ENCODE measurements at regions of chr9 and their contacts with region 1.

Region 1: GRCh38 chr9:137188490-137189296 is at the starts of genes ANAPC2 and SSNA1:
- DNase-seq: peak; percentile 96
- ATAC-seq: peak; percentile 85
- H3K4me3 Mint-ChIP-seq: peak within 1 kb of the TSS; percentile 91
- H3K27ac Mint-ChIP-seq: peak within 1 kb of the TSS; percentile 88
- H3K4me1 Mint-ChIP-seq: peaks cover 33% of the 10 kb centered on the region
- H3K27me3 Mint-ChIP-seq: no peaks in the 10 kb centered on the region
- total RNA-seq, gene ANAPC2: 30.8 to 38.4 TPM
- total RNA-seq, gene SSNA1: 53.6 to 58.6 TPM

Region 2: GRCh38 chr9:137114610-137115391 is 73.9 kb before region 1 on chr9 and contains the start of gene DPP7:
- CTCF ChIA-PET with region 1: interaction called, 3 read pairs
- POLR2A ChIA-PET with region 1: no interaction called
- intact Hi-C with region 1: loop called in 1 of 2 experiments (anchors 2 kb)
- DNase-seq: peak; percentile 89
- ATAC-seq: peak; percentile 90
- H3K4me3 Mint-ChIP-seq: peak within 1 kb of the TSS; percentile 72
- H3K27ac Mint-ChIP-seq: peak within 1 kb of the TSS; percentile 51
- H3K4me1 Mint-ChIP-seq: peaks cover 13% of the 10 kb centered on the region
- H3K27me3 Mint-ChIP-seq: no peaks in the 10 kb centered on the region
- total RNA-seq, gene DPP7: 188 to 204 TPM

Region 3: DNA sequence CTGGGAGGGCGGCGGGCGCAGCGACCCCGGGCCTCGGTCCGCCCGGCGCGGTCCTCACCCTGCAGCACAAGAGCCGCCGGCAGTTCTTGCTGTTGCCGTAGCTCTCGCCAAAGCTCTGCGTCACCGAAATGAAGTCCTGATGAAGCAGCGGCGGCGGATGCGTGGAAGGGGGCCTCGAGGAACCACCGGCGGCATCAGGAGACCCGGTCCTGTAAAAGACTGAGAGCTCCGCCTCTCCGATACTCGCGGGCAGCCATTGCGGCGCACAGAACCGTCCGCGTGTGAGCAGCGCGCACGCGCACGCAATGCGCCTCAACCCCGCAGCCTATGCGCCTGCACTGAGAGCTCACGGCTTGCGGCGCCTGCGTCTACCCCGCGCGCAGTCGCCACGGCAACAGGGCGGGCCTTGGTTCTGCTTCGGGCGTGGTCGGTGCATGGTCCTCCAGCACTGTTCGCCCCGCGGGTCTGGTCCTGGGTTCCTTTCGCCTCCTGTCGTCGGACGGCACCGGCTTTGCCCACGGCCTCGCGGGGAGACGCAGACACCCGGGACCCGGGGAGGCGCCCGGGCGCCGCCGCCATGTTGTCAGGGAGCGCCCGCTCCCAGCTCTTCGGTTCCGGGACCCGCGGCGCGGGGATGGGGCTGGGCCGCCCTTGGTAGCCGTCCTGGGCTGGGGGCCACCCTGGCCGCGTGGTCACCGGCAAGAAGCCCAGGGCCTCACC is 59.1 kb before region 1 on chr9:
- CTCF ChIA-PET with region 1: no interaction called
- POLR2A ChIA-PET with region 1: interaction called, 4 read pairs
- intact Hi-C with region 1: loop called in 1 of 2 experiments (anchors 2 kb)
- DNase-seq: peak; percentile 95
- ATAC-seq: peak; percentile 96
- H3K4me3 Mint-ChIP-seq: peak overlapping the region; percentile 89
- H3K27ac Mint-ChIP-seq: peak overlapping the region; percentile 70
- H3K4me1 Mint-ChIP-seq: peaks cover 21% of the 10 kb centered on the region
- H3K27me3 Mint-ChIP-seq: peaks cover 5% of the 10 kb centered on the region

Region 4: DNA sequence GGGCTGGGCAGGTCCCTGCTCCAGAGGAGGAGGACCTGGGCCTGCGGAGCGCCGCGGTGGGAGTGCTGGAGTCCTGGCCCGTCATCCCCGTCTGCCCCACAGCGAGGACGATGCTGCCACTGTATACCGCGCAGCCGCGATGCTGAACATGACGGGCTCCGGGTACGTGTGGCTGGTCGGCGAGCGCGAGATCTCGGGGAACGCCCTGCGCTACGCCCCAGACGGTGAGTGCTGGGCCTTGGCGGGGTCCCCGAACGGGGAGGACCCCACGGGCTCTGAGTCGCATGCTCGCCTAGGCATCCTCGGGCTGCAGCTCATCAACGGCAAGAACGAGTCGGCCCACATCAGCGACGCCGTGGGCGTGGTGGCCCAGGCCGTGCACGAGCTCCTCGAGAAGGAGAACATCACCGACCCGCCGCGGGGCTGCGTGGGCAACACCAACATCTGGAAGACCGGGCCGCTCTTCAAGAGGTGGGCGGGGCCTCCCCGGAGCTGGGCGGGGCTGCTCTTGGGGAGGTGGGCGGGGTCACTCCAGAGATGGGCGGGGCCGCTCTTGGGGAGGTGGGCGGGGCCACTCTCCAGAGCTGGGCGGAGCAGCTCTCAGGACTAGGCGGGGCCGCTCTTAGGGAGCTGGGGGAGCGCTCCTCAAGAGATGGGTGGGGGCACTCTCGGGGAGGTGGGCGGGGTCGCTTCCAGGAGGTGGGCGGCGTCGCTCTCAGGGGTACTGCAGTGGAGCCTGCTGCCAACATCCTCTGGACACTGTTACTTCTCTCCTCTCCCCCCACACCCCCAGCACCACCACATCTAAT is 31.9 kb before region 1 on chr9:
- CTCF ChIA-PET with region 1: no interaction called
- POLR2A ChIA-PET with region 1: no interaction called
- intact Hi-C with region 1: loop called in 1 of 2 experiments (anchors 2 kb)
- DNase-seq: peak; percentile 85
- ATAC-seq: peak; percentile 79
- H3K4me3 Mint-ChIP-seq: peak overlapping the region; percentile 36
- H3K27ac Mint-ChIP-seq: no peak overlapping the region
- H3K4me1 Mint-ChIP-seq: peaks cover 11% of the 10 kb centered on the region
- H3K27me3 Mint-ChIP-seq: peaks cover 30% of the 10 kb centered on the region

Region 5: GRCh38 chr9:137200311-137201204 is 11.9 kb after region 1 on chr9 and contains the start of gene TPRN:
- CTCF ChIA-PET with region 1: interaction called, 4 read pairs
- POLR2A ChIA-PET with region 1: interaction called, 8 read pairs
- intact Hi-C with region 1: loop called (anchors 1 kb)
- DNase-seq: peak; percentile 99
- ATAC-seq: peak; percentile 99
- H3K4me3 Mint-ChIP-seq: peak within 1 kb of the TSS; percentile 79
- H3K27ac Mint-ChIP-seq: peak within 1 kb of the TSS; percentile 76
- H3K4me1 Mint-ChIP-seq: peaks cover 29% of the 10 kb centered on the region
- H3K27me3 Mint-ChIP-seq: no peaks in the 10 kb centered on the region
- total RNA-seq, gene TPRN: 5.6 to 5.8 TPM

Region 6: DNA sequence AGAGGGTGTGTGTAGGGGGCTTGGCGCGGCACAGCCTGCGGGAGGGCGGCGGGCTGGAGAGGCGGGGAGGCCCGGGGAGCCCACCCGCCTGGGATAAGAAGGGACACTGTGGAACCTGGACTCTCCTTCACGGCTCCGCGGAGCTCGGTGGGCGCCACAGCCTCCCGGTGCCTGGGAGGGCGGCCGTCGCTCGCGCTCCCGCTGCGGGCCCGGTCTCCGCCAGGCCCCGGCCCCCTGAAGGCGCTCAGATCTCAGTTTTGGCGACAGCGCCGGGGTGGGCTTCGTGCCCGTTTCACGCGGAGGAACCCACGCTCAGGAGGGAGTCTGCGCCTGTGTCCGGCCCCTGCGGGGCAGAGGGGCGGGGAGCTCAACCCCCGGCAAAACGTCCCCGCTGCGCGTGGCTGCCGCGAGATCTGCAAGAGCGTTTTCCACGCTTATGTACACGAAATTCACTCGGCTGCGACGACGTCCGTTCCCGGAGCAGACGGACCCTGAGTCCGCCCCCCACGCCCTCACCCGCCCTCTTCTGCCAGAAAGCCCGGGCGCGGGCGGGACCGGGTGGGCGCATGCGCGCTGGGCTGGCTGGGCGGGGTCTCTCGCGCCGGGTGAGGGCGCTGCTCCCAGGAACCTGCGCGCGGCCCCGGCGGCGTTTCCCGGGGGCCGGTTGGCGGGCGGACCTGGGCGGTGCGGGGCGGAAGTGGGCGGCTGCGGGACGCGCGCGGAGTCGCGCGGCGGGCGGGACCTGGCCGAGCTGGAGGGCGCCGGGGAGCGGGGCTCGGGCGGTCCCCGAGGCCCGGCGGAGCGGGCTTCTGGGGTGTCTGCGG is 66.1 kb after region 1 on chr9 and contains the start of gene NELFB:
- CTCF ChIA-PET with region 1: interaction called, 4 read pairs
- POLR2A ChIA-PET with region 1: no interaction called
- intact Hi-C with region 1: loop called in 1 of 2 experiments (anchors 1 kb)
- DNase-seq: peak; percentile 97
- ATAC-seq: peak; percentile 94
- H3K4me3 Mint-ChIP-seq: peak within 1 kb of the TSS; percentile 87
- H3K27ac Mint-ChIP-seq: peak within 1 kb of the TSS; percentile 81
- H3K4me1 Mint-ChIP-seq: peaks cover 18% of the 10 kb centered on the region
- H3K27me3 Mint-ChIP-seq: no peaks in the 10 kb centered on the region
- total RNA-seq, gene NELFB: 41.4 to 54.1 TPM

Measured in activated CD4-positive, alpha-beta T cell treated with anti-CD3 and anti-CD28 coated beads for 36 hours (primary cell).